ENCODE measurements at regions of chr17 and their contacts with region 1.

Region 1: GRCh38 chr17:50841949-50842354 is 6.6 kb downstream of the WFIKKN2 start:
- DNase-seq: no peak
- H3K4me3 ChIP-seq: no peak overlapping the region
- H3K27ac ChIP-seq: no peak overlapping the region
- H3K4me1 ChIP-seq: peaks cover 0 to 3% (median 0%) of the 10 kb centered on the region in 4 donors
- H3K27me3 ChIP-seq: no peaks in the 10 kb centered on the region
- CTCF ChIP-seq: peak; percentile 83 to 86 (median 84)
- EP300 ChIP-seq: no peak
- POLR2A ChIP-seq: no peak

Region 2: DNA sequence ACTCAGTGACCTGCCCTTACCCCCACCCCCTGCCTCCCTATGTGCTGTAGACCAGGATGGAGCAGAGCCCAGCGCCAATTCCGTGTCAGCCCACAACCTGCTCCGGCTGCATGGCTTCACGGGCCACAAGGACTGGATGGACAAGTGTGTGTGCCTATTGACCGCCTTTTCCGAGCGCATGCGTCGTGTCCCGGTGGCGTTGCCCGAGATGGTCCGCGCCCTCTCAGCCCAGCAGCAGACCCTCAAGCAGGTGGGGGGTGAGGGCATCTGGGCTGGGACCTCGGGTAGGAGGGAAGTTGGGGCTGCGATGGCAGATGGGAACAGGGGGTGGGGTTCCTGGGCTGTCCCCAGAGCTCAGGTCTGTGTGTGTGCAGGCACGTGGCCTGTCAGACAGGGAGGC is 287.8 kb before region 1 on chr17:
- intact Hi-C with region 1: no loop called
- DNase-seq: no peak
- H3K4me3 ChIP-seq: no peak overlapping the region
- H3K27ac ChIP-seq: no peak overlapping the region
- H3K4me1 ChIP-seq: peaks cover 0 to 16% (median 11%) of the 10 kb centered on the region in 4 donors
- H3K27me3 ChIP-seq: peaks cover 4 to 14% (median 6%) of the 10 kb centered on the region in 3 donors
- CTCF ChIP-seq: no peak
- EP300 ChIP-seq: no peak
- POLR2A ChIP-seq: no peak

Region 3: DNA sequence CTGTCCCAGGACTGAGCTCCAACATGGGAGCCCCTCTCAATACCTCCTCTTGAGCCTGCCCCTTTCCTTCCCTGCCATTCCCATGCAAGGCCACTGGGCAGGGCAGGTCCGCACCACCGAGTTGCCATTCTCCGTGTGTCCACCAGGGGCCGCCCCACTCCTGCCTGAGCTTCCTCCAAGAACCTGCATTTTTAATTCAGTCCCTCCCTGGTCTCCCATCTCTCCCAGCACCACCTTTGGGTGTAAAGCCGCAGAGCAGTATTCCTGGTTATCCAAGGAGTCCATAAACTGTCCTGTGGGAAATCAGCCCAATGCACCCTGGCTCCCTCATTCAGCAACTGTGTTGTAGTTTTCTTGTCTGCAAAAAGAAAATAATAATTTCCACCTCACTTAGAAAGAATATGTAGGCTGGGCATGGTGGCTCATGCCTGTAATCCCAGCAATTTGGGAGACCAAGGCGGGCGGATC is 58.7 kb before region 1 on chr17:
- intact Hi-C with region 1: loop called (anchors 1 kb)
- DNase-seq: peak; percentile 91
- H3K4me3 ChIP-seq: no peak overlapping the region
- H3K27ac ChIP-seq: no peak overlapping the region
- H3K4me1 ChIP-seq: peaks cover 0 to 22% (median 17%) of the 10 kb centered on the region in 4 donors
- H3K27me3 ChIP-seq: peaks cover 0 to 3% (median 0%) of the 10 kb centered on the region in 3 donors
- CTCF ChIP-seq: peak; percentile 98 to 100 (median 100)
- EP300 ChIP-seq: no peak
- POLR2A ChIP-seq: no peak

Region 4: GRCh38 chr17:50816771-50817751 is 24.9 kb before region 1 on chr17:
- intact Hi-C with region 1: loop called (anchors 1 kb)
- DNase-seq: no peak
- H3K4me3 ChIP-seq: peak overlapping the region in 1 of 4 donors; percentile 21
- H3K27ac ChIP-seq: no peak overlapping the region
- H3K4me1 ChIP-seq: peaks cover 0 to 11% (median 2%) of the 10 kb centered on the region in 4 donors
- H3K27me3 ChIP-seq: no peaks in the 10 kb centered on the region
- CTCF ChIP-seq: peak; percentile 26 to 80 (median 48)
- EP300 ChIP-seq: no peak
- POLR2A ChIP-seq: no peak

Region 5: DNA sequence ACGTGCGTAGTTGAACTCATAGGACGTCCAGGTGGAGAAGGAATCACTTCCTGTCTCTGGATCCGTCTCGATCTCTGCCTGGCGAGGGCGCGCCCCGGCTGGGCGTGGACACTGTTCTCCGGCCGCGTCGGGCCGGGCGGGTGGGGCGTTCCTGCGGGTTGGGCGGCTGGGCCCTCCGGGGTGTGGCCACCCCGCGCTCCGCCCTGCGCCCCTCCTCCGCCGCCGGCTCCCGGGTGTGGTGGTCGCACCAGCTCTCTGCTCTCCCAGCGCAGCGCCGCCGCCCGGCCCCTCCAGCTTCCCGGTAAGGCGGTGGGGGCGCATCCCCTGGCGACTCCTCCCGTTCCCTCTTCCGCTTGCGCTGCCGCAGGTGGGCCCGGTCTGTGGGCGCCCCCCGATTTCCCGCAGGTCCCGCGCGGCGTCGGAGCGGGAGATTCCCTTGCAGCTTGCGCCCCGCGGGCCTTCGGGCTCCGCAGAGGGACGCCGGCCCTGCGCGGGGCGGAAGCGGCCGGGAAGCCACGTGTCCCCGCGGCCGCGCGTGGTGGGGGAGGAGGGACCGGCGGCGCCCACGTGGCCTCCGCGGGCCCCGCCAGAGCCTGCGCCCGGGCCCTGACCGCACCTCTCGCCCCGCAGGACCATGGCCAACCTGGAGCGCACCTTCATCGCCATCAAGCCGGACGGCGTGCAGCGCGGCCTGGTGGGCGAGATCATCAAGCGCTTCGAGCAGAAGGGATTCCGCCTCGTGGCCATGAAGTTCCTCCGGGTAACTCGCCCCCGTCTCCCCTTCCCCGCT is 324.4 kb after region 1 on chr17 and contains the start of gene NME2:
- intact Hi-C with region 1: no loop called
- DNase-seq: peak; percentile 95
- H3K4me3 ChIP-seq: peak within 1 kb of the TSS; percentile 83 to 99 (median 95)
- H3K27ac ChIP-seq: peak within 1 kb of the TSS; percentile 97 to 99 (median 98)
- H3K4me1 ChIP-seq: peaks cover 0 to 16% (median 14%) of the 10 kb centered on the region in 4 donors
- H3K27me3 ChIP-seq: no peaks in the 10 kb centered on the region
- CTCF ChIP-seq: peak in 1 of 4 experiments; percentile 20
- EP300 ChIP-seq: no peak
- POLR2A ChIP-seq: no peak
- total RNA-seq, gene NME2: 443 to 532 (median 524) TPM